Activated B cell treated with CpG ODN at 0.5 μM for 24 hours (primary cell): ENCODE measurements at regions of chr4 and their contacts with region 1.

Region 1: GRCh38 chr4:42656944-42657792 is at the start of gene ATP8A1:
- DNase-seq: peak; percentile 93
- ATAC-seq: peak; percentile 91
- H3K4me3 Mint-ChIP-seq: peak within 1 kb of the TSS; percentile 97
- H3K27ac Mint-ChIP-seq: peak within 1 kb of the TSS; percentile 99
- H3K4me1 Mint-ChIP-seq: peaks cover 41% of the 10 kb centered on the region
- H3K27me3 Mint-ChIP-seq: no peaks in the 10 kb centered on the region
- CTCF ChIP-seq: no peak
- total RNA-seq, gene ATP8A1: 27.9 and 35.6 TPM in 2 replicates

Region 2: DNA sequence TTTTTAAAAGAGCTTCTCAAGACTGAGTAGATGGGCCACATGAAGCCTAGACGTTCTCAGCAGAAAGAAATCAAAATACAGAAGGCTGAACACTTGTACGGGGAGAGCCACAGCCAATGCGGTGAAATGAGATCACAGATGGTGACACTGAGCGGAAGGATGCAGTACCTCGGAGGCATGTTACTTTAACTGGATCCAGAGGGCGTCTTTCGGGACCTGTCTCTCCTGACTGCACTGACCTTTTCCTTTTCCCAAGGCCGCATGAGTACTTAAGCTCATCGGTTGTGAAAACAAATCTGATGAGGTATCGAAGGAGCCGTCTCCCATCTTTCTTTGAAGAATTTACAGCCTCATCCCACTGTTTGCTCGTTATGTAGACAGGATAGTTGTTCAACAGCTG is 537.3 kb before region 1 on chr4:
- CTCF ChIA-PET with region 1: no interaction called
- POLR2A ChIA-PET with region 1: no interaction called
- intact Hi-C with region 1: no loop called
- DNase-seq: no peak
- ATAC-seq: no peak
- H3K4me3 Mint-ChIP-seq: no peak overlapping the region
- H3K27ac Mint-ChIP-seq: no peak overlapping the region
- H3K4me1 Mint-ChIP-seq: no peaks in the 10 kb centered on the region
- H3K27me3 Mint-ChIP-seq: no peaks in the 10 kb centered on the region
- CTCF ChIP-seq: no peak

Region 3: DNA sequence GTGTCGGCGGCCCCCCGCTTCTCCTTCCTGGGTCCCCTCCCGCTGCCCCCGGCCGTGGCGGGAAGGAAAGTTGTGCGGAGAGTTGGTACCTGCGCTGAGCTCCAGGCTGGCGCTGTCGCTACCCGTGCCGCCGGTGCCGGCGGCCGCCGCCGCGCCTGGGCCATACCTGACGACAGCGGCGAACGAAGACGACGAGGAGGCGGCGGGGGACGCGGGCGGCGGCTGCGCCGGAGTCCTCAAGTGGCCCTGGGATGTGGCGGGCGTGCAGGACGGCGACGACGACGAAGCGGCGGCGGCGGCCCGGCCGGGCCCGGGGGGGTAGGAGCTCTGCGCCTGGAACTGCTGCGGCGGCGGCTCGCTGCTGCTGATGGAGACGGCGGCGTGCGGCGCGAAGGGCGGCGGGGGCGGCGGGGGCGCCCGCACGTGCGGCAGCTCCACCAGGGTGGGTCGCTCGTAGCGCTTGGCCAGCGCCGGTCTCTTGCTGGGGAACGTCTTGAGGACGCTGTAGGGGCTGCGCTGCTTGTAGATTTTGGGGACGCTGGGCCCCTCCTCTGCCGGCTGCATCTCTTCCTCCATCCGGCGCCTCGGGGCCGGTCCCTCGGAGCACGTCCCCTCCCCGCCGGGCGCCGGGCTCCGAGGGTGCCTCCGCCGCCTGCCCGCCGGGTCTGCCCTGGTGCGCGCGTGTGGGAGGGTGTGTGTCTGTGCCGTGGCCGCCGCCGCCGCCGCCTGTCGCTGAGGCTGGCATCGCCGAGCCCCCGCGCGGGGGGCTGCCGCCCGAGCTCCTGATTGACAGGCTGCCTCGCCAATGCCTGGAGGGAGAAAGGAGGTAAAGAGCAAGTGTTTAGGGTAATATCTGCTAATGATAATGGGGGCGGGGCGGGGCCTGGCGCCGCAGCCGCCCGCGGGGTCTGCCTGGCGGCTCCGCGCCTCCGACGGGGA is 505.3 kb before region 1 on chr4:
- CTCF ChIA-PET with region 1: no interaction called
- POLR2A ChIA-PET with region 1: no interaction called
- intact Hi-C with region 1: loop called (anchors 5 kb)
- DNase-seq: peak; percentile 73
- ATAC-seq: peak; percentile 77
- H3K4me3 Mint-ChIP-seq: peak overlapping the region; percentile 95
- H3K27ac Mint-ChIP-seq: no peak overlapping the region
- H3K4me1 Mint-ChIP-seq: peaks cover 40% of the 10 kb centered on the region
- H3K27me3 Mint-ChIP-seq: peaks cover 1% of the 10 kb centered on the region
- CTCF ChIP-seq: no peak

Region 4: DNA sequence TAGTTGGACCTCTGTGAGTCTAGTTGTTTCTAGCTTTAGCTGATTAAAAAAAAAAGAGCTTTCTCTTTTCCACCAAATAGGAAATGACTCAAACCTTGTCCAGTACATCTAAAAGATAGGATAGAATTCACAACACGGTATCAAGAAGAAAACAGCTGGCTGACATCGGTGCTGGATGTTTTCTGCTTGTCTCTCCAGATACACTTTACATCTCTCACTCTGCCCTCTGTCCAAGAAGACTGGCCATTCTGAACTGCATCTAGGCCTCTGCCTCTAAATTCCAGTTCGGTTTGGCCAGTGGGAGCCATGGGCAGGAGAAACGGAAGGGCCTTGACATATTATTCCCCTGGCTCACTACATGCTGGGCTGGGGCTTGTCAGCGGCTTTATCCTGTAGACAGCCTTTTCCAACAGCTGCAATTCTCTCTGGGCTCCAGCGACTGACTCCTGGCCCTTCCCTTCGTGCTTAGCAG is 317.2 kb before region 1 on chr4:
- CTCF ChIA-PET with region 1: no interaction called
- POLR2A ChIA-PET with region 1: no interaction called
- intact Hi-C with region 1: no loop called
- DNase-seq: no peak
- ATAC-seq: no peak
- H3K4me3 Mint-ChIP-seq: no peak overlapping the region
- H3K27ac Mint-ChIP-seq: no peak overlapping the region
- H3K4me1 Mint-ChIP-seq: peaks cover 10% of the 10 kb centered on the region
- H3K27me3 Mint-ChIP-seq: no peaks in the 10 kb centered on the region
- CTCF ChIP-seq: no peak

Region 5: GRCh38 chr4:42596918-42597317 is 60.2 kb before region 1 on chr4:
- CTCF ChIA-PET with region 1: no interaction called
- POLR2A ChIA-PET with region 1: interaction called, 20 read pairs
- intact Hi-C with region 1: loop called (anchors 2 kb)
- DNase-seq: no peak
- ATAC-seq: peak; percentile 18
- H3K4me3 Mint-ChIP-seq: no peak overlapping the region
- H3K27ac Mint-ChIP-seq: no peak overlapping the region
- H3K4me1 Mint-ChIP-seq: peaks cover 9% of the 10 kb centered on the region
- H3K27me3 Mint-ChIP-seq: no peaks in the 10 kb centered on the region
- CTCF ChIP-seq: no peak

Region 6: DNA sequence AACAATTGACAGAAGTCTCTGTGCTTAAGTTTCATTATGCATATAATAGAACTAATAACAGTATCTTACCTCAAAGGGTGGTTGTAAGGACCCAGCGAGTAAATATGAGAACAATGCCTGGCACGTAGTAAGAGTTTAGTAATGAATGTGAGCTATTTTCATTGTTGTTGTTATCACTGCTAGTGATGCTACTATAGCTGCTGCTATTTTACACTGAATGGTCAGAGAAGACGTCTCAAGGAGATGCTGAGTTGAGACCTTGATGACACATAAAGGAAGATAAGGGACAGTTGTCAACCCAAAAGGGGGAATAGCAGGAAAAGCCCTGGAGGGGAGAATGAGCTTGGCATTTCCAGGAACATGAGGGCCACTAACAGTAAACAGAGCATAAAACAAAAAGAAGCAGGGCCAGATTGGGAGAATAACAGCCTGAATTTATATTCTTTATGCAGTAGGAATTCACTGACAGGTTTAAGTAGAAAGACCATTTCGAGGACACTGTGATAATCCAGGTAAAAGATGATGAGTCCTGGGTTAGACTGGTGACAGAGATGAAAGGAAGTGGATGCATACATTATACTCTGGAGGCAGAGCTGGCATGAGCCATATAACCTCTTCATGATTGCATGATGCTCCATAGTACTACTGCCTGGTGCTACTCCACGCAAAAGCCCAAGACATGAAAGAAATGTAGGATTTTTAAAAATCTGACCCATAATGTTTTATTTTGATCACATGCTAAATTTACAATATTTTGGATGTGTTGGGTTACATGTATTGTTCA is 23.4 kb before region 1 on chr4:
- CTCF ChIA-PET with region 1: interaction called, 17 read pairs
- POLR2A ChIA-PET with region 1: interaction called, 72 read pairs
- intact Hi-C with region 1: loop called (anchors 1 kb)
- DNase-seq: no peak
- ATAC-seq: no peak
- H3K4me3 Mint-ChIP-seq: no peak overlapping the region
- H3K27ac Mint-ChIP-seq: peak overlapping the region; percentile 82
- H3K4me1 Mint-ChIP-seq: peaks cover 89% of the 10 kb centered on the region
- H3K27me3 Mint-ChIP-seq: no peaks in the 10 kb centered on the region
- CTCF ChIP-seq: no peak

Region 7: DNA sequence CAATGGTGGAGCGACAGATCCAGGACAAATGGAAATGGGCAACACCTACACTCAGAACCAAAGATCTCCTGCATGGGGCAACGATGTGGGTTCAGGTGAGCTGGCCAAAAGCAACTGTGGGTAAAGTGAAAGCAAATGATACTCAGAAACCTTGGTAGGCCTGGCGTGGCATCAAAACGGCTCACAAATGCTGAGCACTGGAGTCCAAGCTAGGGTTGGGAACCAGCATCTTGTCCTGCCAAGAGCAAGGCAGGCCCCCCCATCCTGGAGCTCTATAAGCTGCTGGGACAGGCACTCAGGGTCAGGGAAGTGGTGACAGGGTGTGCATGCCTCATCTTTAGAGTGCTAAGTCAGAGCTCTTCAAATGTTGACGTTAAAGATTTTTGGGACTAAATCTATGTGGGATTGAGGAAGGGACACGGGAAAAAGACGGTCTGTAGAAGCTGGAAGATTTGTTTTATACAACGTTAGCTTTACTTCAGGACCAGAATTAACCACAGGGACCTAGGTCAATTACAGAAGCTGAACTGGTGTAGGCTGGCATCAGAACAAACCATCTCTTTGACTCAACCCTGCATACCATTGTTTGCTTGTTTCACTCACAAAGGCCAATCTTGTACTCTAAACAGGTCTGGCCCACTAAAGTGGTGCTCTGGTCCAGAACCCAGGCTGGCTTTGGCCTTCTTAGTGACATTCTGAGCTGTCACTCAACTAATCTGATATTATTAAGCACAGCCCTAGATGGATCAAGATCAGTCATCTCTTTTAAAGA is 11.0 kb before region 1 on chr4:
- CTCF ChIA-PET with region 1: interaction called, 9 read pairs
- POLR2A ChIA-PET with region 1: interaction called, 95 read pairs
- intact Hi-C with region 1: loop called (anchors 1 kb)
- DNase-seq: no peak
- ATAC-seq: no peak
- H3K4me3 Mint-ChIP-seq: peak overlapping the region; percentile 41
- H3K27ac Mint-ChIP-seq: peak overlapping the region; percentile 56
- H3K4me1 Mint-ChIP-seq: peaks cover 80% of the 10 kb centered on the region
- H3K27me3 Mint-ChIP-seq: no peaks in the 10 kb centered on the region
- CTCF ChIP-seq: no peak

Region 8: GRCh38 chr4:42678512-42678911 is 21.3 kb after region 1 on chr4:
- CTCF ChIA-PET with region 1: interaction called, 4 read pairs
- POLR2A ChIA-PET with region 1: interaction called, 17 read pairs
- intact Hi-C with region 1: no loop called
- DNase-seq: no peak
- ATAC-seq: no peak
- H3K4me3 Mint-ChIP-seq: no peak overlapping the region
- H3K27ac Mint-ChIP-seq: no peak overlapping the region
- H3K4me1 Mint-ChIP-seq: peaks cover 10% of the 10 kb centered on the region
- H3K27me3 Mint-ChIP-seq: no peaks in the 10 kb centered on the region
- CTCF ChIP-seq: no peak